Activated CD4-positive, alpha-beta T cell treated with anti-CD3 and anti-CD28 coated beads for 36 hours (primary cell): ENCODE measurements at regions of chr14 and their contacts with region 1.

Region 1: DNA sequence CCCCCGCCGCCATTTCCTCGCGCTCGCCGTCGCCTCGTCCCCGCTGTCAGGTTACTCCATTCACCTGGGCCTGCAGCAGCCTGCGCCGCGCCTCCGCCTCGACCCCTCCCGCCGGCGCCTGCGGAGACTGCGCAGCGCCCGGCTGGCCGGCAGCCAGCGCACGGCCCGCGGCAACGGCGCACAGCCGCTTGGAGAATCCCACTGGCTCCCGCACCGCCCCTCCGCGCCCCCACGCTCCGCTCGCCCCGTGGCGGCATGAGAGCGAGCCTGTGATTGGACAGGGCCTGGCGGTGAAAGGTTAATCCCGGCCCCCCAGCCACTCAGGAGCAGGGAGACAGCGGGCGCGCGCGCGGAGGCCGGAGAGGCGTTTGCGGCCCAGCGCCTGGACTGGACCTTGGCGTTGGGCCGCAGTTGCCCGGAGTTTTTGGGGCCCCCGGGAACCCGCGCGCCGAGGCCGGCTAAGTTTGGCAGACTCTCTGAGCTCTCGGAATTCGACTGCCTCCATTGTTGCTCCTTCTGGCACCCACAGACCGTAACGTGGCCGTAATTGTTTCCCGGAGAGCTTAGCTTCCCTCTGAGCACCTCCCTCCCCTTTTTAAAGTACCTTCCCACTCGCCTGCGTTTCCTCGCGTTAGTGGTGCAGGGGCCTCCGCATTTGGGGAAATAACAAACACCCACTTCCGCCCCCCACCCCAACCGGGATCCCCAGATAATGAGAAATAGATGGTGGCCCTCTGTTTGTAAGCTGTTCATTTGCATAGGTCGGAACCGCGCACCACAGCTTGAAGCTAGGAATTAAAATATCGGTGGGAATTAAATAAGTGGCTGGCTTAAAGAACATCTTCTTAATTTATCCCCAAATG is at the start of gene DICER1:
- DNase-seq: peak; percentile 97
- ATAC-seq: peak; percentile 83
- H3K4me3 Mint-ChIP-seq: peak within 1 kb of the TSS; percentile 95
- H3K27ac Mint-ChIP-seq: peak within 1 kb of the TSS; percentile 99
- H3K4me1 Mint-ChIP-seq: peaks cover 36% of the 10 kb centered on the region
- H3K27me3 Mint-ChIP-seq: no peaks in the 10 kb centered on the region
- total RNA-seq, gene DICER1: 41.6 to 61.1 TPM

Region 2: DNA sequence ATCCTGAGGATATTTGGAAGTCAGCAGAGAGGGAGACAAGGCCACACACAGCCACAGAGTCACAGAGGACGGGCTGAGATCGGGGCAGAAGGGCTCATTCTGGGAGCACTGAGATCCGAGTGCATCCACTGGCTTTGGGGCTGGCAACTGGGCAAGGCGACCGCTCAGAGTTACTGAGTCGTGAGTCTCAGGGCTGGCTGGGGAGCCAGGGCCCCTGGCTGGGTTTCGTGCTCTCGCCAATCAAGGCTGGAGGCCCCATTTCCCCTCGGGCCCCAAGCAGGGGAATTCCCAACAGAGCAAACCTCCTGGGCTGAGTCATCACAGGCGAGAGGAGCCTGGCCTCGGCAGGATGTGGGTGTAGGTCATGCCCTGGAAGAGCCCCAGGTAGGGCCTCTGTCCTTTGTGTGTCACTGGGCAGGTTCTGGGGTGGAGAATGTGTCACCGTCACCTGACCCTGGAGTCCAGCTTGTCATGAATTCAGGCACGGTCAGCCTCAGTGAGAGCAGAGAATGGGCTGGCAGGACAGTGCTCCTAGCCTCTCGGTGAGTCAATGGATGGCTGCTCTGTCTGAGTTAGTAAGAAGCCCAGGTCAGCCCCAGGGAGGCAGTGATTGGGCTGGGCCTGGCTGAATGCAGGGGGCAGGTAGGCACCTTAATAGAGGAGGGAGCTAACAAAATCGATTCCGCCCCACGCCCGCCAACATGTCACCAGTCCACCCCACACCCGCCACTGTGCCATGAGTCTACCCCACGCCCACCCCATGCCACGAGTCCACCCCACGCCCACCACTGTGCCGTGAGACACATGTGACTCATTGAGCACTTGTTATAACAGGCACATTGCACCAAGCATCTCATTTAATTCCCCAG is 1198.1 kb before region 1 on chr14:
- CTCF ChIA-PET with region 1: no interaction called
- POLR2A ChIA-PET with region 1: no interaction called
- intact Hi-C with region 1: loop called in 1 of 2 experiments (anchors 10 kb)
- DNase-seq: peak; percentile 97
- ATAC-seq: peak; percentile 74
- H3K4me3 Mint-ChIP-seq: peak overlapping the region; percentile 70
- H3K27ac Mint-ChIP-seq: peak overlapping the region; percentile 100
- H3K4me1 Mint-ChIP-seq: peaks cover 96% of the 10 kb centered on the region
- H3K27me3 Mint-ChIP-seq: no peaks in the 10 kb centered on the region

Region 3: GRCh38 chr14:95085326-95085725 is 72.2 kb before region 1 on chr14:
- CTCF ChIA-PET with region 1: no interaction called
- POLR2A ChIA-PET with region 1: no interaction called
- intact Hi-C with region 1: no loop called
- DNase-seq: no peak
- ATAC-seq: no peak
- H3K4me3 Mint-ChIP-seq: no peak overlapping the region
- H3K27ac Mint-ChIP-seq: no peak overlapping the region
- H3K4me1 Mint-ChIP-seq: no peaks in the 10 kb centered on the region
- H3K27me3 Mint-ChIP-seq: no peaks in the 10 kb centered on the region

Region 4: DNA sequence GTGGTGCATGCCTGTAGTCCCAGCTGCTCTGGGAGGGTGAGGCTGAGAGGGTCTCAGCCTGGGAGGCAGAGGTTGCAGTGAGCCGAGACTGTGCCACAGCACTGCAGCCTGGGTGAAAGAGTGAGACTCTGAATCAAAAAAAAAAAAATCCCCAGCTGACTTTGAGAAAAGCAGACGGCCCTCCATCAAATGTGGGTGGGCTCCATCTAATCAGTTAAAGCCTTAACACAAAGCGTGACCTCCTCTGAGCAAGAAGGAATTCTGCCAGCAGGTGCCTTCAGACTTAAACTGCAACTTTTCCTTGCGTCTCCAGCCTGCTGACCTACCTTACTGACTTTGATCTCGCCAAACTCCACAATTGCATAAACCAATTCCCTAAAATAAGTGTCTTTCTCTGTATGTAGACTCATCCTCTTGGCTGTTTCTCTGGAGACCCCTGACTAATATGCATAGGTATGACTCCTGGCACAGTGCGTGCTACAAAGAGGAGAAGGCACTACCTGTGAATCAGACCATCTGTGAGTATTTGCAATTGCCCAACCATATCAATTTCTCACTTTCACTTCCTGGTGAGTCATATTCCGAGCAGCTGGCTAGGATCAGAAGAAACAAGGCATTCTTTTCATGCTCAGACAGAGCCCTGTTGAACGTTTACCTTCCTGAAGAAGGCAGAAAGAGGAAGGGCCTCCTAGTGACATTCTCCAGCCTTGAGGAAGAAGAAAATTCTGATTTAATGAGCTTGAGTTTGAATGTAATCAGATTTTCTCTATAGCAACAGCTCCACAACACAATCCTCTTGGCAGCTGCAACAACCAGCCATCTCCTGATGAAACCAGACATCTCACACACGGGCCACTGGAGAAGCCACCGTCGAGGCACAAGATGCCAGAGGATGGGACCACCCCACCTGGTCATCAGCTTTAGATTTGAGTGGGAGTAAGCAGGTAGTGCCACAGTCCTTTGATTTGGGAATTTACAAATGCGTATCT is 107.8 kb after region 1 on chr14:
- CTCF ChIA-PET with region 1: no interaction called
- POLR2A ChIA-PET with region 1: no interaction called
- intact Hi-C with region 1: loop called (anchors 2 to 5 kb)
- DNase-seq: peak; percentile 66
- ATAC-seq: peak; percentile 83
- H3K4me3 Mint-ChIP-seq: no peak overlapping the region
- H3K27ac Mint-ChIP-seq: peak overlapping the region; percentile 35
- H3K4me1 Mint-ChIP-seq: peaks cover 39% of the 10 kb centered on the region
- H3K27me3 Mint-ChIP-seq: no peaks in the 10 kb centered on the region

Region 5: DNA sequence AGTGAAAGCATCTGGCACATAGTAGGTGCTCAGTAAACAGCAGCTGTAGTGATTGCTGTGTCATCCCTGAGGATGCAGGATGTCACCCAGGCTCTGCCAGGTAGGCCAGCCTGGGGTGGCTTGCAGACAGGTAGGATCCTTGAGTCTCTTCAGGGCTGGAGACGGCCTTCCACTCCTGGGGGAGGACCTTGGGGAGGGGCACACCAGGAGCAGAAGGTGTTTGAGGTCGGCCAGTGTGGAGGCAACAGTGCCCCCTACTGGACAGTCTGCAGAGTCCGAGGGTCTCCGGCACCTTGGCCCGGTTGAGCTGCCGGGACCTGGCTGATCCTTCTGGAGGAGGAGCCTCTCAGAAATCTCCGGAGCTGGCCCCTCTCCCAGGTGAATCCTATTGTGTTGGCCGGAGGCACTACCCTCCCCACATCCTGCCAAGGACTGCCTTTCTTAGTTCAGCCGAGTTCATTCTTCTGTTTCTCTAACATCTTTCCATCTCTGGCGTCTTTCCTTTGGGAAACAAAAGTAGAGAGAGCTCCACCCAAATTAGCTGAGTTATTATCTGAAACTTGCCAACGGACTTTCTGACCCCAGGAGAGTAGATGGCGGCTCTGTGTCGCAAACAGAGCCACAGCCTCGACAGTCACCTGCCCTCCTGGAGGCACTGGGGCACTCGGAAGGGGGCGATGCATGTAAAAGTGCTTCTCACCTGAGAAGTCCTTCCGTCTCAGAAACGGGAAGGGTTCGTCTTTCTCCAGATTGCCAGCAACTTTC is 204.0 kb after region 1 on chr14:
- CTCF ChIA-PET with region 1: no interaction called
- POLR2A ChIA-PET with region 1: no interaction called
- intact Hi-C with region 1: loop called in 1 of 2 experiments (anchors 5 kb)
- DNase-seq: peak; percentile 66
- ATAC-seq: peak; percentile 76
- H3K4me3 Mint-ChIP-seq: no peak overlapping the region
- H3K27ac Mint-ChIP-seq: no peak overlapping the region
- H3K4me1 Mint-ChIP-seq: no peaks in the 10 kb centered on the region
- H3K27me3 Mint-ChIP-seq: peaks cover 40% of the 10 kb centered on the region

Region 6: DNA sequence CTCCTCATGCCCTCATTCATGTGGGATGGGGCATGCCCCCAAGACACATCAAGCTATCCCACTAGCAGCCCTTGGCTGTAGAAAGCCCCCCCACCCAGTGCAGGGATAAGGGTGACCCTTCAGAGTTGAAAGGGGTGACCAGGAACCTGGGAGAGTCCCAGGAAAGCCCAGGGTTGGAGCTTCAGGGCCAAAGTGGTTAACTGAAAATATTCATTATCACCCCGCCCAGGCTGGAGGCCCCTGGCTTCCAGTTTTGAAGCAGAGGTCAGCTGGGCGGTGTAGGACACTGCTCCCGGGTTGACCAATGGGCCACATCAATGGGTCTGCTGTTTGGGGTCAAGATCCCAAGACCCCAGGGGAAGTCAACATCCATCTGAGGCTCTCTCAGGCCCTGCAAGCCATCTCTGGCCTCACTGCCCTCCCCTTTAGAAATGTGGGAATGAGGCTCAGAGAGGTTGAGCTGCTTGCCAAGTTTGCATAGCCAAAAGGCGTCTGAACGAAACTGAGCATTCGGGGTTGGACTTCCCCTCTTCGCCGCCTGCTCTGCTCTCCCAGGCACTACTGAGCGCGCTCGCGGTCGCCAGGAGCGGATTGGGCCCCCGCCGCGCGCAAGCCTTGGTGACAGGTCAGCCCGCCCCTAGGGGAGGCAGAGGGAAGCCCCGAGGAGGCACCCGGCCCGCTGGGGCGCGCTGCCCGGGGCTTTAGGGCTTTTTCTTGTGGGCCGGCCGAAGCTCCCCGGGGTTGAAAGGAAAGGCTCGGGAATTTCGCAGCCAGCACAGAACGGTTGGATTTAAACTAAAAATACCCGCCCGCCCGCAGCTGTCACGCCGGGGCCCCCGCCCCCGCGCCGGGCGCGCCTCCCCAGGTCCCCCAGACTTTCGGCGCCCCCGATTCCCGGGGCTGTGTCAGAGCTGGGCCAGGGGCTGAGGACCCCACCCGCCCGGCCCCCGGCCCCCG is 358.3 kb after region 1 on chr14:
- CTCF ChIA-PET with region 1: no interaction called
- POLR2A ChIA-PET with region 1: no interaction called
- intact Hi-C with region 1: loop called in 1 of 2 experiments (anchors 5 kb)
- DNase-seq: peak; percentile 93
- ATAC-seq: peak; percentile 85
- H3K4me3 Mint-ChIP-seq: peak overlapping the region; percentile 87
- H3K27ac Mint-ChIP-seq: peak overlapping the region; percentile 94
- H3K4me1 Mint-ChIP-seq: peaks cover 68% of the 10 kb centered on the region
- H3K27me3 Mint-ChIP-seq: no peaks in the 10 kb centered on the region

Region 7: GRCh38 chr14:96362965-96363756 is 1205.6 kb after region 1 on chr14 and contains the starts of genes ATG2B and GSKIP:
- CTCF ChIA-PET with region 1: no interaction called
- POLR2A ChIA-PET with region 1: no interaction called
- intact Hi-C with region 1: loop called in 1 of 2 experiments (anchors 2 kb)
- DNase-seq: peak; percentile 99
- ATAC-seq: peak; percentile 79
- H3K4me3 Mint-ChIP-seq: peak within 1 kb of the TSS; percentile 86
- H3K27ac Mint-ChIP-seq: peak within 1 kb of the TSS; percentile 90
- H3K4me1 Mint-ChIP-seq: peaks cover 55% of the 10 kb centered on the region
- H3K27me3 Mint-ChIP-seq: no peaks in the 10 kb centered on the region
- total RNA-seq, gene ATG2B: 13.5 to 17.6 TPM
- total RNA-seq, gene GSKIP: 12.1 to 20.7 TPM